Breast epithelium (tissue), 4 donors: ENCODE measurements at regions of chr12 and their contacts with region 1.

Region 1: DNA sequence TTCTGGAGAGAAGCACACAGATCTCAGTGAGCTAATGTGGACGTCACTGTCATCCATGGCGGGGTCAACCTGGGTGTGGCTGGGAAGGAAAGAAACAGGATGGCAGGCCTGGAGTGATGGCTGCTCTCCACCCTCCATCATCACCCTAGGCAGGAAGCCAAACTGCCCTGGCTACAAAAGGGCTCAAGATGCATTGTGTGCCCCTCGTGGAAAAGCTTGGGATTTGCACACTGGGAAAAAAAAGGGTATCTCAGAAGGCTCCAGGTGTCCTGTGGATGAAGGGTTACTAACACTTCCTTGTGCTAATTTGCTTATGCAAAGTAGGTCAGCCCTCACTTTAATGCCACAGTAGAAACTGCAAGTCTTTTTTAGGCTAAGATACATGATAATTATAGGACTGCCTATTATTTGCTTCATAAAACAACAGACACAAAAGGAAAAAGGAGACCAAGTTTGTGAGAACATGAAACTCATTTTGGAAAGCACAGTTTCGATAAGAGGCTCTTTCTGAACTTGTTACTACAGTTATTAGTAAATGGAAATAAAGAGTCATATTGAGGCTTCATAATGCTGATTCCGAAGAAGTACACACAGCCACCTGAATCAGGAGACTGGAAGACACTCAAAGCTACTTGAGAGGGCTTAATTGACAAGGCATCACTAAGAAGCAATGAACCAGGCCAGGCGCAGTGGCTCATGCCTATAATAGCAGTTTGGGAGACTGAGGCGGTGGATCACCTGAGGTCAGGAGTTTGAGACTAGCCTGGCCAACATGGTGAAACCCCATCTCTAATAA is 18.9 kb downstream of the RFC5 start:
- DNase-seq: no peak
- H3K4me3 ChIP-seq: no peak overlapping the region
- H3K27ac ChIP-seq: no peak overlapping the region
- H3K4me1 ChIP-seq: no peaks in the 10 kb centered on the region
- H3K27me3 ChIP-seq: no peaks in the 10 kb centered on the region
- CTCF ChIP-seq: no peak
- POLR2A ChIP-seq: no peak

Region 2: GRCh38 chr12:117714203-117714602 is 321.2 kb before region 1 on chr12:
- intact Hi-C with region 1: no loop called
- DNase-seq: no peak
- H3K4me3 ChIP-seq: no peak overlapping the region
- H3K27ac ChIP-seq: no peak overlapping the region
- H3K4me1 ChIP-seq: no peaks in the 10 kb centered on the region
- H3K27me3 ChIP-seq: peaks cover 0 to 5% of the 10 kb centered on the region in 2 donors
- CTCF ChIP-seq: no peak
- POLR2A ChIP-seq: no peak

Region 3: GRCh38 chr12:119684711-119685369 is 1649.4 kb after region 1 on chr12:
- intact Hi-C with region 1: loop called (anchors 5 kb)
- DNase-seq: no peak
- H3K4me3 ChIP-seq: no peak overlapping the region
- H3K27ac ChIP-seq: no peak overlapping the region
- H3K4me1 ChIP-seq: no peaks in the 10 kb centered on the region
- H3K27me3 ChIP-seq: no peaks in the 10 kb centered on the region
- CTCF ChIP-seq: no peak
- POLR2A ChIP-seq: no peak